ENCODE measurements at regions of chr15 and their contacts with region 1.

Region 1: GRCh38 chr15:85625856-85626255 is 168.9 kb downstream of the KLHL25 start:
- DNase-seq: no peak

Region 2: GRCh38 chr15:85639752-85640381 is 14.0 kb after region 1 on chr15:
- intact Hi-C with region 1: loop called in 1 of 2 experiments (anchors 2 kb)
- DNase-seq: no peak

Region 3: DNA sequence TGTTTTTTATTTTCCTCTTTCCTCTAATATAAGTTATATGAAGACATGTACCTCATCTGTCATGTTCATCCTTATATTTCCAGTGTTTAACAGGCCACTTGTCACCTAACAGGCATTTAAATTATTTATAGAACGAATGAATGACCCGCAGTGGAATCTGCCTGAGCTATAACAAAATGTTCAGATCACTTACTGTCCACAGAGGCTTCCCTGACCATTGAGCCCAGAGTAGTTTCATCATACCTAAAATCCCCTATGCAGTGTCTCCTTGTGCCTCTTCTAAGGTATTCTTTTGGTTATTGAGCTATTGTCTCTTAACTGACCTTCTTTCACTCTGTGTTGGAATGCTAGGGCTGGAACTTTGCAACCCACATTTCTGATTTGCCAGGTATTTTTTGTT is 1882.2 kb after region 1 on chr15:
- intact Hi-C with region 1: no loop called
- DNase-seq: no peak